A549 (cell line): ENCODE measurements at regions of chr3 and their contacts with region 1.

Region 1: GRCh38 chr3:138118612-138119422 is 3.4 kb upstream of the DZIP1L start:
- DNase-seq: peak; percentile 63 to 64
- ATAC-seq: peak; percentile 62 to 72
- H3K4me3 ChIP-seq: no peak overlapping the region
- H3K27ac ChIP-seq: 0 out of 6 replicates have a peak overlapping the region, but pooled peaks of 1 of the 2 experiments have one; percentile 28
- H3K4me1 ChIP-seq: peaks cover 17% of the 10 kb centered on the region
- CTCF ChIP-seq: peak; percentile 70
- EP300 ChIP-seq: no peak
- POLR2A ChIP-seq: no peak
- RAD21 ChIP-seq: peak; percentile 84 to 92

Region 2: DNA sequence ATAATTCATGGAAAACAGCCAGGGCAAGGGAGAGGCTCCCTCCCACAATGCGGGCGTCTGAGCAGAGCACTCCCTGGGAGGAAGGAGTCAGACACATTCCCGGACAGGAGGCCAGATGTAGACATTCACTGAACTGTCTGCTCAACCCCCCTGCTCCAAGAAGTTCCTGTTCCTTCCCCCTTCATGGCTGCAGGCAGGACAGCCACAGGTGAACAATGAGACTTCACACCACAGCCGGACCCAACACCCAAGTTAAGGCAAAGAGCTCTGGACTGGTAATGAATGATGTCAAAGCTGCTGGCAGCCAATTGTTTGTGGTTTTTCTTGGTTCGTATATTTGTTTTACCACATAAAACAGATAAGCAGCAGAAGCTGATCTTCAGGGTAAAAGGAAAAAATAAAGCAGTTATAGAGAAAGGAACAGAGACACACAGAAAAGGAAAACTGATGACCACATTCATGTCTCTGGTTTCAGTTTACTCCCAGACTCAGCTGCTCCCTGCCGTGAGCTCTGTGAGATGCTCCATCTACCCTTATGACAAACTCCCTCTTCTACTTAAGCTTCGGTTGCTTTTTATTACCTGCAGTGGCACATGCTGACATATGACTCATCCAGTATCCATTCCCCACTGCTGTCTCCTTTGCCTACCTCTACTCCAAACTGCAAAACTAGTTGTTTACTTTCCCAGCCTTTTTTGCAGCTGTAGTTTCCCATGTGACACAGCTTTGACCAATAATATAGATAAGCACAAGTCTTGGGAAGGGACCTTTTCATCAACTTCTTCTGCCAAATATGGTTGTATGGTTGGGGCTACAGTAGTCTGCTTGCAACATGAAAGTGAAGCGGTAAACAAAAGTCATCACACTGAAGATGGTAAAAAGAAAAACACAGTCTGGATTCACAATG is 36.5 kb before region 1 on chr3:
- CTCF ChIA-PET with region 1: interaction called, 29 read pairs
- POLR2A ChIA-PET with region 1: no interaction called
- DNase-seq: peak in 1 of 2 experiments; percentile 70
- ATAC-seq: peak; percentile 49 to 54
- H3K4me3 ChIP-seq: no peak overlapping the region
- H3K27ac ChIP-seq: peak overlapping the region; percentile 87 to 88
- H3K4me1 ChIP-seq: peaks cover 66% of the 10 kb centered on the region
- CTCF ChIP-seq: no peak
- EP300 ChIP-seq: no peak
- POLR2A ChIP-seq: no peak
- RAD21 ChIP-seq: no peak

Region 3: GRCh38 chr3:138089091-138089490 is 29.7 kb before region 1 on chr3:
- CTCF ChIA-PET with region 1: interaction called, 16 read pairs
- POLR2A ChIA-PET with region 1: interaction called, 4 read pairs
- DNase-seq: peak in 1 of 2 experiments; percentile 50
- ATAC-seq: peak; percentile 56 to 84; a peak in 4 of 6 replicates
- H3K4me3 ChIP-seq: no peak overlapping the region
- H3K27ac ChIP-seq: peak overlapping the region; percentile 41 to 76; a peak in 5 of 6 replicates
- H3K4me1 ChIP-seq: peaks cover 42% of the 10 kb centered on the region
- CTCF ChIP-seq: no peak
- EP300 ChIP-seq: peak in 1 of 2 experiments; percentile 37; a peak in 1 of 5 replicates
- POLR2A ChIP-seq: no peak
- RAD21 ChIP-seq: no peak

Region 4: GRCh38 chr3:138103466-138103865 is 15.4 kb before region 1 on chr3:
- CTCF ChIA-PET with region 1: interaction called, 33 read pairs
- POLR2A ChIA-PET with region 1: no interaction called
- DNase-seq: no peak
- ATAC-seq: no peak
- H3K4me3 ChIP-seq: no peak overlapping the region
- H3K27ac ChIP-seq: no peak overlapping the region
- H3K4me1 ChIP-seq: no peaks in the 10 kb centered on the region
- CTCF ChIP-seq: no peak
- EP300 ChIP-seq: no peak
- POLR2A ChIP-seq: no peak
- RAD21 ChIP-seq: no peak

Region 5: GRCh38 chr3:138165061-138165460 is 46.2 kb after region 1 on chr3:
- CTCF ChIA-PET with region 1: no interaction called
- POLR2A ChIA-PET with region 1: no interaction called
- DNase-seq: no peak
- ATAC-seq: no peak
- H3K4me3 ChIP-seq: no peak overlapping the region
- H3K27ac ChIP-seq: no peak overlapping the region
- H3K4me1 ChIP-seq: no peaks in the 10 kb centered on the region
- CTCF ChIP-seq: no peak
- EP300 ChIP-seq: no peak
- POLR2A ChIP-seq: no peak
- RAD21 ChIP-seq: no peak